K562 (cell line): ENCODE measurements at regions of chr3 and their contacts with region 1.

Region 1: DNA sequence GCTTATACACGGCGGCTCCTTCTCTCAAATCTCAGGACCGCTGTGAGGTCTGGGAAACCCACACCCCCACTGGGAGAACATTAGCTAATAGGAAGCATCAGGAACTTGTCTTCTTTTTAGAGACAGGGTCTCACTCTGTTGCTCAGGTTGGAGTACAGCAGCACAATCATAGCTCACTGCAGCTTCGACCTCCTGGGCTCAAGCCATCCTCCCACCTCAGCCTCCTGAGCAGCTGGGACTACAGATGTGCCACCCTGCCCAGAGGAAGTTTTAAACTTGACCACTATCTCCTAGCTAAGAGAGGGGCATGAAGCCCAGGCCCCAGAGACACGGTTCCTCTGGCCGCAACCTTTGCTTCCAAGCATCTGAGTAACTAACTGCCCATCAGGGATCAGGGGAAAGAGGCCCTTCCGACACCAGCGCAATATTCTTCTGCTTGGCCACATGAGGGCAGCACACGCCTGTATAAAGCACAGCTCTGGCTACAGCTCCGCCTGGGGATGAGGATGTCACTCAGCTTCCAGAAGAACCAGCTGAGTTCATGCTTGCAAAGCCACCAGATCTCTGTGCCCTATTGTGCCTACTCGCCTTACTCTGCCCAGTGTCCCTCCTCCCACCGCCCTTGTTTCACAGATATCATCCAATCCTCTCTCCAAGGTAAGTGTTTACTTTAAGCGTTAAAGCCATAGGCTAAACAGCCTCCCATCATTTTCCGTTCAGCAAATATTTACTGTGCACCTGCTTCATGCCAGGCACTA is 57.5 kb upstream of the SLC6A11 start:
- DNase-seq: peak; percentile 76 to 85 (median 84)
- ATAC-seq: peak; percentile 99
- H3K4me3 ChIP-seq: no peak overlapping the region
- H3K27ac ChIP-seq: no peak overlapping the region
- H3K4me1 ChIP-seq: no peaks in the 10 kb centered on the region
- H3K27me3 ChIP-seq: peaks cover 0 to 9% of the 10 kb centered on the region in 2 experiments; a peak in 2 of 5 replicates
- CTCF ChIP-seq: peak; percentile 85 to 97 (median 96)
- EP300 ChIP-seq: no peak
- POLR2A ChIP-seq: no peak
- RAD21 ChIP-seq: peak; percentile 76 to 89

Region 2: DNA sequence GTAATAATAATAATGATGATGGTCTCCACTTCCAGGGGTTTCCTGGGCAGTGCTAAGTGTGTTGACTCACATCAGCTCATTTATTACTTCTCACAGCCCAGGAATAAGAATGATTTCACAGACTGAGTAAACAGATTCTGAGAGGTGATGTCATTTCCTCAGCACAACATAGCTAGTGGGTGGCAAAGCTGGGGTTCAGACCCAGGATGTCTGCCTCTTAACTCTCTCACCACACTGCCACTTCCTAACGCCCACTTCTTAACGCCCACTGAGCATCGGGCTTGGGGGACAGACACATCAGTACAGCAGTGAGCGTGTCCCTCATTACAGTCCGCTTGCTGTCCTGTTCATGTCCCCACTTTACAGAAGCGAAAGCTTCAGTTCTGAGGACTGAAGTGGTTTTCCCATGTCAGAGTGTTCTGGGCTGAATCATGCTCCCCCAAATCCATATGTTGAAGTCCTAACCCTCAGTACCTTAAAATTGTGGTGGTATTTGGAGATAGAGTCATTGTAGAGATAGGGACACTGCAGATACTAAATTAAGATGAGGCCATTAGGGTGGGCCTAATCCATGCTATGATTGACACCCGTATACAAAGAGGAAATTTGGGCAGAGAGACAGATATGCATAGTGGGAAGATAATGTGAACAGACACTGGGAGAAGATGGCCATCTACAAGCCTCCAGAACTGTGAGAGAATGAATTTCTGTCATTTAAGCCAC is 321.1 kb before region 1 on chr3:
- CTCF ChIA-PET with region 1: no interaction called
- POLR2A ChIA-PET with region 1: no interaction called
- in situ Hi-C with region 1: no loop called
- intact Hi-C with region 1: no loop called
- DNase-seq: no peak
- ATAC-seq: no peak
- H3K4me3 ChIP-seq: no peak overlapping the region
- H3K27ac ChIP-seq: no peak overlapping the region
- H3K4me1 ChIP-seq: peaks cover 4 to 9% of the 10 kb centered on the region in 2 experiments; a peak in 2 of 5 replicates
- H3K27me3 ChIP-seq: peaks cover 15 to 62% of the 10 kb centered on the region in 2 experiments; a peak in 4 of 5 replicates
- CTCF ChIP-seq: no peak
- EP300 ChIP-seq: no peak
- POLR2A ChIP-seq: no peak
- RAD21 ChIP-seq: no peak

Region 3: DNA sequence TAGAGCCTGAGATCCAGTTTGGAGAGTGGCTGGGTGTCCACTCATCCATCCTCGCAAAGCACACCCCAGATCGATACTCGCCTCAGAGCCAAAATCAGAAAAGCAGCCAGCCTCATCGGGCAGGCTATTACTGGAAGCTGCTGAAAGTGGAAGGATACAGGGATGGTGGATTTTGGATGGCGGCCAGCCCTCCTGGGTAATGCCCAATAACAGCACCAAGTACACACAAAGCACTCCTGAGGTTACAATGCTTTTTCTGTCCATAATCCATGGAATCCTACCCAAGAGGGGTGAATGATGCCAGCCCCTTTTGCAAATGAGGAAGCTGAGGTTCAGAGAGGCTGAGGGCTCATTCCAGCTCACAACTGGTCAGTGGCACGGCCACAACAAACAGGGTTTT is 35.6 kb before region 1 on chr3:
- CTCF ChIA-PET with region 1: no interaction called
- POLR2A ChIA-PET with region 1: no interaction called
- in situ Hi-C with region 1: no loop called
- intact Hi-C with region 1: no loop called
- DNase-seq: no peak
- ATAC-seq: no peak
- H3K4me3 ChIP-seq: no peak overlapping the region
- H3K27ac ChIP-seq: no peak overlapping the region
- H3K4me1 ChIP-seq: no peaks in the 10 kb centered on the region; a peak in 1 of 5 replicates
- H3K27me3 ChIP-seq: peaks cover 4 to 14% of the 10 kb centered on the region in 2 experiments; a peak in 3 of 5 replicates
- CTCF ChIP-seq: no peak
- EP300 ChIP-seq: no peak
- POLR2A ChIP-seq: no peak
- RAD21 ChIP-seq: no peak

Region 4: GRCh38 chr3:10783357-10784351 is 25.2 kb after region 1 on chr3:
- CTCF ChIA-PET with region 1: interaction called, 11 read pairs
- POLR2A ChIA-PET with region 1: no interaction called
- in situ Hi-C with region 1: no loop called
- intact Hi-C with region 1: no loop called
- DNase-seq: peak; percentile 60 to 73 (median 64)
- ATAC-seq: peak; percentile 87
- H3K4me3 ChIP-seq: no peak overlapping the region
- H3K27ac ChIP-seq: no peak overlapping the region
- H3K4me1 ChIP-seq: no peaks in the 10 kb centered on the region
- H3K27me3 ChIP-seq: no peaks in the 10 kb centered on the region
- CTCF ChIP-seq: peak; percentile 71 to 84 (median 80)
- EP300 ChIP-seq: no peak
- POLR2A ChIP-seq: no peak
- RAD21 ChIP-seq: peak; percentile 25 to 53; a peak in 2 of 4 replicates

Region 5: DNA sequence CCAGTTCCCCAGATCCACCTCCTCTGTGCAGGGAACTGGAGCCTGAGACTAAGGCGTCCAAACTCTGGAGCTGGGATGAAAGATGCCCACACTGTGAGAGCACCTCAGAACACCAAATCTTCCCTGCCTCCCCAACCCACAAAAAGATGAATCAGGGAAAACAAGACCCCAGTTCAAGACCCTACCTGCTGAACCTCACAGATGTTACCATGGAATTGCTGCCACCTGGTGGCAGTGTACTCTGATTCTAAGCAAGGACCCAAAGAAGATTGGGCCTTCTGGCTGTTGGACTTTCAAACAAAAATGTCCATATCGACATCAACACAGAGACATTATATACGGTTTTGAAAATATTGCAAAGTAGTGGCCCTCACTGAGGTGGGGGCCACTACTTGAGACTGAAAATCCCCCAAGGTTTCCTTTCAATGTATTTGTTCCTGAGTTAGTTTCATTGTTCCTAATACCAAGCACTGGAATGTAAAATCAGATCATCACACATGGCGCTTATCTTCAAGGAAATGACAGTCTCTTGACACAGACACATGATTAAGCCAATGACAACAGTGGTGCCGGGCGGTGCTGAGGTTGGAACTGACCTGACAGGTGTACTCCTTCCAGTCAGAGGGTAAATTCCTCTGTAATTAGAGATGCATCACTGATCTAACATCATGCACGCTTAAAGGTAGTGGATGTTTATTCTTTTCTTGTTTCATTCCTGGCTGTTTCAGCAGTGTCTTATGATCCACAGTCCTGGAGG is 125.2 kb after region 1 on chr3:
- CTCF ChIA-PET with region 1: no interaction called
- POLR2A ChIA-PET with region 1: no interaction called
- in situ Hi-C with region 1: no loop called
- intact Hi-C with region 1: loop called (anchors 2 kb)
- DNase-seq: peak; percentile 33 to 48 (median 39)
- ATAC-seq: no peak
- H3K4me3 ChIP-seq: no peak overlapping the region
- H3K27ac ChIP-seq: no peak overlapping the region
- H3K4me1 ChIP-seq: no peaks in the 10 kb centered on the region
- H3K27me3 ChIP-seq: peaks cover 4 to 17% of the 10 kb centered on the region in 2 experiments; a peak in 3 of 5 replicates
- CTCF ChIP-seq: peak; percentile 33 to 56 (median 34); a peak in 5 of 6 replicates
- EP300 ChIP-seq: no peak
- POLR2A ChIP-seq: no peak
- RAD21 ChIP-seq: peak in 1 of 2 experiments; percentile 45; a peak in 2 of 4 replicates

Region 6: DNA sequence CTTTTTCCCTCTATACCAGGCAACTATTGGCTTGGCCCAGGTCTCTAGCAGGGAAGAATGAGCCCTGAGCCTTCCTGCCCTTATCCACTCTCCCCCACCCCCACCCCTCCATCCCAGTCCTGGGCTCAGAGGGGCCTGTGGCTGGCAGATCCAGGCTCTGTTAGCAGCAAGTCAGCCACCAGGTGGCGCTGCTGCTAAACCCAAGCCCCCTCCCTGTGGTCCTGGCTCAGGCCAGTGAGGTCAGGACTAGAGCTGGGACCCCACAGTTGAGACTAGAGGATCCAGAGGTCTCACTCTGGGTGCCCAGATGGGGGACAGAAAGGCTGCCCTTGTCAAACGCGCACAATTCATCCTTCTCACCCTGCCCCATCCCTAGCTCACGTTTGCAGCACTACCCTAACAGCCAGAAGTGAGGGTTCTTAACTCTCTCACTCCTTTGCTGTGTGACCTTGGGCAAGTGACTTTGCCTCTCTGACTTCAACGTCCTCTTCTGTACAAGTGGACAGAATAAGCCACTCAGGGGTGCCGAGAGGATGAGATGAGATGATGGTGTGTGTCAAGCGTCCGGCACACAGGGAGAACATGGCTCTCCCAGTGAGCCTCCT is 187.3 kb after region 1 on chr3:
- CTCF ChIA-PET with region 1: interaction called, 3 read pairs
- POLR2A ChIA-PET with region 1: no interaction called
- in situ Hi-C with region 1: no loop called
- intact Hi-C with region 1: loop called (anchors 2 kb)
- DNase-seq: peak; percentile 79 to 92 (median 86)
- ATAC-seq: peak; percentile 99
- H3K4me3 ChIP-seq: no peak overlapping the region
- H3K27ac ChIP-seq: no peak overlapping the region
- H3K4me1 ChIP-seq: no peaks in the 10 kb centered on the region; a peak in 1 of 5 replicates
- H3K27me3 ChIP-seq: peaks cover 0 to 26% of the 10 kb centered on the region in 2 experiments; a peak in 2 of 5 replicates
- CTCF ChIP-seq: peak; percentile 85 to 92 (median 91)
- EP300 ChIP-seq: no peak
- POLR2A ChIP-seq: no peak
- RAD21 ChIP-seq: peak; percentile 65 to 86

Region 7: DNA sequence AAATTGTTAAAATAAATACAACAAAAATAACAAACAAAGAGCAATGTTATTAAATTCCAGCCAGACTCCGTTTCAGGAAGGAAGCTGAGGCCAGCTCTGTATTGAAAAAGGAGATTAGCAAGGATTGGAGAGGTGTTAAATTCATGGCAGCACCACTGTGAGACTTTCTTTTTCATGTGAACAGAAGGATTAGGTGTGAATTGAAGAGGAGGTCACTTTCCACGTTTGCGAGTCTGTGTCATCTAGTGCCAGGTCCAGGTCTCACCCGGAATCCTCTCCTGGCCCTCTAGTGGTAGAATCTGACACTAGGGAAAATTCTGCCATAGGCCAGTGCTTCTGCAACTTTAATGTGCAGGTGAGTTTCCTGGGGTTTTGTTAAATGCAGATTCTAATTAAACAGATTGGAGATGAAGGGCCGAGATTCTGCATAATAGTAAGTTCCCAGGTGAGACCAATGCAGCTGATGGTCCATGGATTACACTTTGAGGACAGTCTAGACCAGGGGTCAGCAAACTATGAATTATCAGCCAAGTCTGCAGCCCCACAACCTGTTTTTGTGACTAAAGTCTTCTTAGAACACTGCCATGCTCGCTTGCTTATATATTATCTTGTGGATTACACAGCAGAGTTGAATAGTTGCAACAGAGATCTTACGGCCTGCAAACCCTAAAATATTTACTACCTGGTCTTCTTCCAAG is 224.9 kb after region 1 on chr3:
- CTCF ChIA-PET with region 1: no interaction called
- POLR2A ChIA-PET with region 1: no interaction called
- in situ Hi-C with region 1: no loop called
- intact Hi-C with region 1: loop called (anchors 10 kb)
- DNase-seq: peak; percentile 43 to 80 (median 76)
- ATAC-seq: peak; percentile 91
- H3K4me3 ChIP-seq: no peak overlapping the region
- H3K27ac ChIP-seq: no peak overlapping the region
- H3K4me1 ChIP-seq: no peaks in the 10 kb centered on the region
- H3K27me3 ChIP-seq: peaks cover 0 to 7% of the 10 kb centered on the region in 2 experiments; a peak in 1 of 5 replicates
- CTCF ChIP-seq: peak; percentile 73 to 84 (median 75)
- EP300 ChIP-seq: no peak
- POLR2A ChIP-seq: no peak
- RAD21 ChIP-seq: peak; percentile 7 to 51; a peak in 2 of 4 replicates

Region 8: DNA sequence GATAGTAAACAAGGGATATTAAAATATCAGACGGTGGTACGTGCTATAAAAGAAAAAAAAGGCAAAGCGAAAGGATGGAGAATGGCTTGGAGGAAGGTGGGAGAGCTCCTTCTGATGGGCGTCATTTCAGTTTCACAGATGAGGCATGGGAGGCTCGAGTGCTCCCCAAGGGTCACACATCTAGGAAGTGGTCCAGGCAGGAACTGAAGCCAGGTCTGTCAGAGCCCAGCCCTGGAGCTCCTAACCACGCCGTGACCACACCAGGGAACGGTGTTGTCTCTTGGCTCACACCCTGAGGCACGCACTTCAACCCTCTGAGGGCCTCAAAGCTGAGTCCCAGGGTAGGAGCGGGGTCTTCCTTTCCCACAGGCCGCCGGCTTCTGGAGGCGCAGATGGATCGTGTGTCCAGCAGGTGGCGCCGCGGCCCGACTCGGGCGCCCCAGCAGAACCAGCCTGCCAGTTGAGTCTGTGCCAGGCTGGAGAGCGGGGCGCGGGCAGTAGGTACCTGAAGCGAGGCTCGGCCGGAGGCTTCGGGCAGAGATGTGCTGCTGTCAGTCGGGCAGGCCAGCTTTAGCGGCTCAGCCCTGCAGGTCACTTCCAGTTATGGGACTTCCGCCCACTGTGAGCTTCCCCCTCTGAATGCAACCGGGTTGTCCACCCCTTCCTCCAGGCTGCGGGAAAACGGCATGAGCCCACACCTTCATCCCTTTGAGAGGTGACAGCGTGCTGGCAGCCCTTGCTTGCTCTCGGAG is 302.2 kb after region 1 on chr3:
- CTCF ChIA-PET with region 1: interaction called, 3 read pairs
- POLR2A ChIA-PET with region 1: no interaction called
- in situ Hi-C with region 1: loop called (anchors 5 kb)
- intact Hi-C with region 1: loop called (anchors 1 kb)
- DNase-seq: peak; percentile 53 to 77 (median 70)
- ATAC-seq: peak; percentile 92
- H3K4me3 ChIP-seq: no peak overlapping the region
- H3K27ac ChIP-seq: no peak overlapping the region
- H3K4me1 ChIP-seq: peaks cover 0 to 10% of the 10 kb centered on the region in 2 experiments; a peak in 2 of 5 replicates
- H3K27me3 ChIP-seq: peaks cover 0 to 19% of the 10 kb centered on the region in 2 experiments; a peak in 2 of 5 replicates
- CTCF ChIP-seq: peak; percentile 71 to 87 (median 82)
- EP300 ChIP-seq: no peak
- POLR2A ChIP-seq: no peak
- RAD21 ChIP-seq: peak; percentile 66 to 79